Sciatic nerve (tissue), 2 donors: ENCODE measurements at regions of chr1 and their contacts with region 1.

Region 1: GRCh38 chr1:160004001-160004400 is 27.8 kb downstream of the PIGM start:
- DNase-seq: no peak
- ATAC-seq: no peak

Region 2: GRCh38 chr1:158686111-158687009 is 1317.6 kb before region 1 on chr1 and contains the start of gene SPTA1:
- intact Hi-C with region 1: no loop called
- DNase-seq: no peak
- ATAC-seq: no peak
- total RNA-seq, gene SPTA1: 3.8 TPM

Region 3: DNA sequence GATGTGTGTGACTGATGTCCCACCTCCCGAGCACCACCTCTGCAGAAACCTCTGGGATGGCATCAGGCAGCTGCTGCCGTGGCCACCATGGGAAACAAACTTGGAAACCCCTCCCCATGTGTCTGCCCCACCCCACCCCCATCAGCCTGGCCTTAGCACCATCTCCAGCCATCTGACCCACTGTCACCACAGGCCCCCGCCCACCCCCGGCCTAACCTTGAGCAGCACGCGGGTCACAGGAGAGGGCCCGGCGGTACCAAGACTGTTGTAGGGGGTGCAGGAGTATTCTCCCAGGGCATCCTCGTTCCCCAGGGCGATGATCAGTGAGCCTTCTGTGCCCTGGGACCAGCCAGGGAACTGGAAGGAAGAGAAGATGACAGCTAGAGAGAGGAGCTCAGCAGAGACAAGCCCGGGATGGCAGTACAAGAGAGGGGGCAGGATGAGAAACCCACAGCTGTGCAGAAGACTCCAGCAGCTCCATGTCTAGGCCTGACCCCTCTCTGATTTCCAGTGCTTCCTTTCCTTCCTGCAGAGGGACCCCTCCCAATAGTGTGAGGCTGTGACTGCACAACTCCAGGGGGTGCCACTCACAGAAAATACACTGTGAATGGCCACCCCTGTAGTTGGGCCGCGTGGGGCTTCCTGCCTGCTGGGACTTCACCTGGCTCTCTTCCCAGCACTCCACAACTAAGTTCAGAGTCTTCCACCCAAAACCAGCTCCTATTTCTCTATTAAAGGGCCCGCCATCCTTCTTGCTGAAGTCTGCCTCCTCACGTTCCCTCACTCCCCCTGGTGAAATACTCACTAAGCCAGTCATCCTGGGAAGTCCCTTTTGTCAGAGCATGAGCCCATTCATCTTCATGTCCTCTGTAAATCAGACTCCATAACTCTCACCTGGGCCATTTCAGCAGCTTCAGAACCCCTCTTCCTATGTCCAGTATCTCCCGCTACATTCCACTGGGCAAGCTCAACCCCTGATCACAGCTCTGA is 71.4 kb before region 1 on chr1:
- intact Hi-C with region 1: loop called (anchors 5 kb)
- DNase-seq: no peak
- ATAC-seq: no peak

Region 4: DNA sequence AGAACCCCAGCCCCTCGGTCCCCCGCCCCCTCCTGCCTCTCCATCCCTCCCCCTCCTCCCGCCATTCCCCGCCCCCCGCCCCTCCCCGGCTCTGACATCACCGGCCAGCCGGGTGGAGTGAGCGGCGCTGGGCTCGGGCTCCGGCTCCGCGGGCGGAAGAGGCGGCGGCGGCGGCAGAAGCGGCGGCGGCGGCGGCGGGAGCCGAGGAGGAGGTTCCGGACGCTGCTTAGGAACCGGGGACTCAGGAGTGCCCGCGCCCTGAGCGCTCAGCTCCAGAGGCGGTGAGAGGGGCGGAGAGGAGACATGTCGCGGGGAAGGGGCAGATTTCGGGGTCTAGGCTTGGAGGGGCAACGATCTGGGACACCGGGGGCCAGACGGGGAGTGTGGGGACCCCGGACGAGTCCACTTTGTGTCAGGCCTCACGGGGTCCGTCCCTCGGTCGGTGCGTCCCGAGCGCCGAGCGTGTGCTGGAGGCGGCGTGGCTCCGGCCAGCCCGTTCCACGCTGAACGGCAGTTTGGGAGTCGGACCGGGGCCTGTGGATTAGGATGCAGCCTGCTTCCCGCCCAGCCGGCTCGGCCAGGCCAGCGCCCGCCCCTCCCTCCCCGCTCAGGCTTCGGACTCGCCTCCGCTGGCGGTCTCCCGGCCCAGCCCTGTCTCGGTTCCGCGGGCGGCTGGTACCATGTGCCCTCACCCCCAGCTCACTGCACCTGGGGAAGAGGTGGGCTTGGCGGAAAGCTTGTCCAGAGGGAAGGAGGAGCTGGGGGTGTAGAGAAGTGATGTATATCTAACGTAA is 201.4 kb after region 1 on chr1 and contains the start of gene PEA15:
- intact Hi-C with region 1: no loop called
- DNase-seq: peak; percentile 87
- ATAC-seq: peak; percentile 90
- total RNA-seq, gene PEA15: 324 TPM